ENCODE measurements at regions of chr11 and their contacts with region 1.

Region 1: GRCh38 chr11:355581-356458 is 13.5 kb upstream of the B4GALNT4 start:
- DNase-seq: peak; percentile 94
- H3K4me3 Mint-ChIP-seq: peak overlapping the region; percentile 35
- H3K27ac Mint-ChIP-seq: peak overlapping the region; percentile 62
- H3K4me1 Mint-ChIP-seq: peaks cover 28% of the 10 kb centered on the region
- H3K27me3 Mint-ChIP-seq: peaks cover 11% of the 10 kb centered on the region
- CTCF ChIP-seq: no peak

Region 2: DNA sequence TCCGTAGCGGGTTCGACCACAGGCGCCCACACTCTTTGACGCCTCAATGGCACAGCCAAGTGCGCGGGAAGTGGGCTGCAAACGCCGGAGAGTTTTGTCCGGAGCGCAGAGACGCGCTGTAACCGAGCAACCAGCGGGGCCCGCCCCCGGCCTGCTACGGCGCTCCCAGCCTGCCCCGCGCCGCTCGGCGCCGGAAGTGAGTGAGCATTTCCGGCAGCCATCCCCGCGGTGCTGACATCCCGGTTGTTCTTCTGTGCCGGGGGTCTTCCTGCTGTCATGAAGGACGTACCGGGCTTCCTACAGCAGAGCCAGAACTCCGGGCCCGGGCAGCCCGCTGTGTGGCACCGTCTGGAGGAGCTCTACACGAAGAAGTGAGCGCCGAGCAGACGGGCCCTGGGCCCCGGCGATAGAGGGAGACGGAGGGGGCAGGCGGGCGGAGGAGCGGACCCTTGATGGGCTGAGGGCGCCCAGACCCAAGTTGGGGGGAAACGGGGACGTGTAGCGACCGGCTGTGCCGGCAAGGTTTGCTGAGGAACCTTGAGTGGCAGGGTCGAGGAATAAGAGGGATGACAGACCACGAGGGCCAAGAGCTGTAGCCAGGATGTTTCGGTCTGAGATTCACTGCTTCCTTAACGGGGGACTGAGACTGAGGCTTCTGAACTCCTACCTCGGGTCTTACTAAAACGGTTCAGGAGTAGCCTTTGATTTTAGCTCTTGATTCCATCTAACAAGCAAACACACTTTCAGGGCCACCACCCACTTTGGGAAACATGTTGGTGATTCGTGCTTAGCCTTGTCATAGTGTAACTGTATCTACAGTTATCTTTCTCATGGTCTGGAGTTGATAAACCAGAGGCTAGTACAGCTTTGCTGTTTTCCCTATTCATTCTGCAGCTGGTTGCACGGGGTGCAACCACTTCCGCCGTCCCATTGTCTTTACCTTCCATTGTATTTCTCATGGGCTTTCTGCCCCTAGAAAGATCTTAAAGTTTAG is 118.7 kb before region 1 on chr11 and contains the start of gene PSMD13:
- CTCF ChIA-PET with region 1: interaction called, 3 read pairs
- POLR2A ChIA-PET with region 1: interaction called, 23 read pairs
- intact Hi-C with region 1: no loop called
- DNase-seq: peak; percentile 76
- H3K4me3 Mint-ChIP-seq: peak within 1 kb of the TSS; percentile 79
- H3K27ac Mint-ChIP-seq: peak within 1 kb of the TSS; percentile 96
- H3K4me1 Mint-ChIP-seq: peaks cover 24% of the 10 kb centered on the region
- H3K27me3 Mint-ChIP-seq: no peaks in the 10 kb centered on the region
- CTCF ChIP-seq: no peak
- total RNA-seq, gene PSMD13: 86.8 and 103 TPM in 2 replicates

Region 3: DNA sequence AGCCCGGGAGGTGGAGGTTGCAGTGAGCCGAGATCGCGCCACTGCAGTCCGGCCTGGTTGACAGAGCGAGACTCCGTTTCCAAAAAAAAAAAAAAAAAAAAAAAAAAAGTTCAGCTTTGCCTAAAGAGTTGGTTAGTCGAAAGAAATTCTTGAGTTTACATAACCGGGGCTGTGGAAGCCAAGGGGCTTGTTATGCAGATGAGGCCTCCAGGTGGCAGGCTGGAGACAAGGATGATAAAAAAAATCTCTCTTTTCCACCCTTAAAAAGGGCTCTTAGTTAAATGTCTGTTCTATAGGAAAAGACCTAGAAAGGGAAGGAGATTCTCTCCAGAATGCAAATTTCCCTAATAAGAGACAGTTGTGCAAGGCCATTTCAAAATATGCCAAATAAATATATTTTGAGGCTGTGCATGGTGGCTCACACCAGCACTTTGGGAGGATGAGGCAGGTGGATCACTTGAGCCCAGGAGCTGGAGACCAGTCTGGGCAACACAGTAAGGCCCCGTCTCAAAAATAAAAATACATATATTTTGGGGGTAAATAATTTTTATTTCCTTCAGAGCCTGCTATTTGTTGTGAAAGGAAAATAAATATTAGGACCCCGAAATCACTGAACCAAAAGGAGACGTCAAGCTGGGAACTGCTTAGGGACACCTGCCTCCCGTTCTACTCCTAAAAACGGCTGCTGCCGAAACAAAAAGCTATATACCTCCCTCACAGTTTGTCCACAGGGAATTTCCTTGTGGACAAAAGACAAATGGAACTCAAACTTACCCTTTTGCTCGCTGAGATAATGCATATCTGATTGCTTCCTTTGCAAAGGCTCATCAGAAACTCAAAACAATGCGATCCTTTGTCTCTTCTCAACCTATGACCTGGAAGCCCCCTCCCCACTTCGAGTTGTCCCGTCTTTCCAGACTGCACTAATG is 50.6 kb before region 1 on chr11:
- CTCF ChIA-PET with region 1: interaction called, 68 read pairs
- POLR2A ChIA-PET with region 1: interaction called, 24 read pairs
- intact Hi-C with region 1: loop called (anchors 1 kb)
- DNase-seq: peak; percentile 74
- H3K4me3 Mint-ChIP-seq: no peak overlapping the region
- H3K27ac Mint-ChIP-seq: no peak overlapping the region
- H3K4me1 Mint-ChIP-seq: peaks cover 20% of the 10 kb centered on the region
- H3K27me3 Mint-ChIP-seq: no peaks in the 10 kb centered on the region
- CTCF ChIP-seq: peak; percentile 58

Region 4: DNA sequence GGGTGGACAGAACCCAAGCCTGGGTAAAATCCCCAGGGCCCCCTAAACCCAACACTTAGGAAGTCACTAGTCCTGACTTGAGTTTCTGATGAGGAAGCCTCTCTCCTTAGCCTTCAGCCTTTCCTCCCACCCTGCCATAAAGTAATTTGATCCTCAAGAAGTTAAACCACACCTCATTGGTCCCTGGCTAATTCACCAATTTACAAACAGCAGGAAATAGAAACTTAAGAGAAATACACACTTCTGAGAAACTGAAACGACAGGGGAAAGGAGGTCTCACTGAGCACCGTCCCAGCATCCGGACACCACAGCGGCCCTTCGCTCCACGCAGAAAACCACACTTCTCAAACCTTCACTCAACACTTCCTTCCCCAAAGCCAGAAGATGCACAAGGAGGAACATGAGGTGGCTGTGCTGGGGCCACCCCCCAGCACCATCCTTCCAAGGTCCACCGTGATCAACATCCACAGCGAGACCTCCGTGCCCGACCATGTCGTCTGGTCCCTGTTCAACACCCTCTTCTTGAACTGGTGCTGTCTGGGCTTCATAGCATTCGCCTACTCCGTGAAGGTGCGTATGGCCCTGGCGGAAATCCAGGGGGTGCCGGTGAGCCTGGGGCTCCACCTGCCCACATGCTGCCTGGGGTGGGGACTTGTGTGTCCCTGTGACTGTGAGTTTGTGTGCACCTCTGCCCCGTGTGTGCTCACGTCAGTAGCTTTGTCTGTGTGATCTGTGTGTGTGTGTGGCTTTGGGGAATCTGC is 41.9 kb before region 1 on chr11 and contains the start of gene IFITM1:
- CTCF ChIA-PET with region 1: interaction called, 8 read pairs
- POLR2A ChIA-PET with region 1: interaction called, 27 read pairs
- intact Hi-C with region 1: no loop called
- DNase-seq: peak; percentile 74
- H3K4me3 Mint-ChIP-seq: peak within 1 kb of the TSS; percentile 46
- H3K27ac Mint-ChIP-seq: no peak within 1 kb of the TSS
- H3K4me1 Mint-ChIP-seq: peaks cover 19% of the 10 kb centered on the region
- H3K27me3 Mint-ChIP-seq: no peaks in the 10 kb centered on the region
- CTCF ChIP-seq: no peak
- total RNA-seq, gene IFITM1: 1.8 and 4.8 TPM in 2 replicates

Region 5: DNA sequence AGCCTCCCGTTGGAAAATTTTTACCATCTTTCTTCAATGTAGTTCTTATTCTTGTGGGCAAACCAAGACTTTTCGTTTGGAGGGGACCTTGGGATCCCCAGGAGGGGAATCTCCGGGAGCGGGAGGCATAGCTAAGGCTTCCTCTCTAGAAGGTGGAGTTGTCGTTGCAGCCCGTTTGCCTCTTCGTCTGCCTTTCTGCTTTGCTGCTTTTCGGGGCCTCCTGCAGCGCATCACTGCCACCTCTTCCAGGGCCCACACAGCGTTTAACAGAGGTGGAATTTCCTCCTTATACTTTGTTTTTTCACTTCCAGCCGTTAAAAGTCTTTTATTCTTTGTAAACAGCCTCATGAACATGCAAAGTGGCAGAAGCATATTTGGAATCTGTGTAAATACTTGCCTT is 31.7 kb before region 1 on chr11:
- CTCF ChIA-PET with region 1: interaction called, 3 read pairs
- POLR2A ChIA-PET with region 1: interaction called, 27 read pairs
- intact Hi-C with region 1: no loop called
- DNase-seq: no peak
- H3K4me3 Mint-ChIP-seq: no peak overlapping the region
- H3K27ac Mint-ChIP-seq: peak overlapping the region; percentile 40
- H3K4me1 Mint-ChIP-seq: no peaks in the 10 kb centered on the region
- H3K27me3 Mint-ChIP-seq: no peaks in the 10 kb centered on the region
- CTCF ChIP-seq: no peak

Region 6: DNA sequence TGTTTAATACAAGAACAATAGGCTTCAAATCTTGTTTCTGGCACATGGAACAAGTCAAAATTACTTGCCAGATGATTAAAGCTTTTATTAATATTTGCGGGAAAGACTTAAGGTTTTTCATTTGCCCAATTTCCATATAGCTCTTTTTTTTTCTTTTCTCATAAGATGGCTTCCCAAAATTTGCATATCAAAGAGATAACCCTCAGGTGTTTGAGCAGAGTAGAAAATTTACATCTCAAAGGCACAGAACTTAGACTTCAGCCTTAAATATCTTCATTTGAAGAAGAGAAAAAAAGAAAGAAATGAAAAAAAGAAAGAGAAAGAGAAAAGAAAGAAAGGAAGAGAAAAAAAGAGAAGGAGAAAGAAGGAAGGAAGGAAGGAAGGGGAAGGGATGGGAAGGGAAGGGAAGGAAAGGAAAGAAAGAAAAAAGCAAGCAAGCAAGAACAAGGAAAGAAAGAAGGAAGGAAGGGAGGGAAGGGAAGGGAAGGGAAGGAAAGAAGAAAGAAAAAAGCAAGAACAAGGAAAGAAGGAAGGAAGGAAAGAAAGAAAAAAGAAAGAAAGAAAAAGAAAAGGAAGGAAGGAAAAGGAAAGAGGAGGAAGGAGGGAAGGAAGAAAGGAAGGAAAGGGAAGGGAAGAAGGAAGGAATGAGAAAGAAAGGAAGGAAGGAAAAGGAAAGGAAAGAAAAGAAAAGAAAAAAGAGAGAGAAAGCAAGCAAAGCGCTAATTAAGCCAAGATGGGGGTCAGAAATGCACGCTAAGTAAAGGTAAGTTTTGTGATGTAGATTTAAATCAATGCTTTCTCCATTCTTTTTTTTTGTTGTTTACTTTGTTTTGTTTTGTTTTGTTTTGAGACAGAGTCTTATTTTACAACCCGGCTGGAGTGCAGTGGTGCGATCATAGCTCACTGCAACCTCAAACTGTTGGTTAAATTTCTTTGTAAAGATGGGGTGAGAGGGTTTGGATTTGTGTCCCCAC is 15.0 kb before region 1 on chr11:
- CTCF ChIA-PET with region 1: interaction called, 7 read pairs
- POLR2A ChIA-PET with region 1: interaction called, 10 read pairs
- intact Hi-C with region 1: no loop called
- DNase-seq: no peak
- H3K4me3 Mint-ChIP-seq: no peak overlapping the region
- H3K27ac Mint-ChIP-seq: no peak overlapping the region
- H3K4me1 Mint-ChIP-seq: no peaks in the 10 kb centered on the region
- H3K27me3 Mint-ChIP-seq: peaks cover 20% of the 10 kb centered on the region
- CTCF ChIP-seq: no peak

Region 7: GRCh38 chr11:394034-394857 is 38.4 kb after region 1 on chr11 and contains the start of gene PKP3:
- CTCF ChIA-PET with region 1: interaction called, 3 read pairs
- POLR2A ChIA-PET with region 1: interaction called, 10 read pairs
- intact Hi-C with region 1: no loop called
- DNase-seq: peak; percentile 94
- H3K4me3 Mint-ChIP-seq: peak within 1 kb of the TSS; percentile 96
- H3K27ac Mint-ChIP-seq: peak within 1 kb of the TSS; percentile 94
- H3K4me1 Mint-ChIP-seq: peaks cover 19% of the 10 kb centered on the region
- H3K27me3 Mint-ChIP-seq: no peaks in the 10 kb centered on the region
- CTCF ChIP-seq: no peak
- total RNA-seq, gene PKP3: 129 and 177 TPM in 2 replicates